ENCODE measurements at regions of chr20 and their contacts with region 1.

Region 1: GRCh38 chr20:4726710-4727397 is 5.1 kb downstream of the PRND start:
- DNase-seq: peak; percentile 62
- ATAC-seq: peak; percentile 35
- H3K4me3 Mint-ChIP-seq: peak overlapping the region; percentile 56
- H3K27ac Mint-ChIP-seq: peak overlapping the region; percentile 52
- H3K4me1 Mint-ChIP-seq: peaks cover 10% of the 10 kb centered on the region
- H3K27me3 Mint-ChIP-seq: no peaks in the 10 kb centered on the region

Region 2: GRCh38 chr20:4607287-4607713 is 119.6 kb before region 1 on chr20:
- CTCF ChIA-PET with region 1: interaction called, 10 read pairs
- POLR2A ChIA-PET with region 1: no interaction called
- DNase-seq: peak; percentile 70
- ATAC-seq: peak; percentile 80
- H3K4me3 Mint-ChIP-seq: no peak overlapping the region
- H3K27ac Mint-ChIP-seq: no peak overlapping the region
- H3K4me1 Mint-ChIP-seq: no peaks in the 10 kb centered on the region
- H3K27me3 Mint-ChIP-seq: peaks cover 20% of the 10 kb centered on the region

Region 3: GRCh38 chr20:4613718-4614620 is 112.9 kb before region 1 on chr20:
- CTCF ChIA-PET with region 1: interaction called, 19 read pairs
- POLR2A ChIA-PET with region 1: no interaction called
- DNase-seq: peak; percentile 83
- ATAC-seq: peak; percentile 87
- H3K4me3 Mint-ChIP-seq: no peak overlapping the region
- H3K27ac Mint-ChIP-seq: no peak overlapping the region
- H3K4me1 Mint-ChIP-seq: peaks cover 8% of the 10 kb centered on the region
- H3K27me3 Mint-ChIP-seq: peaks cover 10% of the 10 kb centered on the region

Region 4: DNA sequence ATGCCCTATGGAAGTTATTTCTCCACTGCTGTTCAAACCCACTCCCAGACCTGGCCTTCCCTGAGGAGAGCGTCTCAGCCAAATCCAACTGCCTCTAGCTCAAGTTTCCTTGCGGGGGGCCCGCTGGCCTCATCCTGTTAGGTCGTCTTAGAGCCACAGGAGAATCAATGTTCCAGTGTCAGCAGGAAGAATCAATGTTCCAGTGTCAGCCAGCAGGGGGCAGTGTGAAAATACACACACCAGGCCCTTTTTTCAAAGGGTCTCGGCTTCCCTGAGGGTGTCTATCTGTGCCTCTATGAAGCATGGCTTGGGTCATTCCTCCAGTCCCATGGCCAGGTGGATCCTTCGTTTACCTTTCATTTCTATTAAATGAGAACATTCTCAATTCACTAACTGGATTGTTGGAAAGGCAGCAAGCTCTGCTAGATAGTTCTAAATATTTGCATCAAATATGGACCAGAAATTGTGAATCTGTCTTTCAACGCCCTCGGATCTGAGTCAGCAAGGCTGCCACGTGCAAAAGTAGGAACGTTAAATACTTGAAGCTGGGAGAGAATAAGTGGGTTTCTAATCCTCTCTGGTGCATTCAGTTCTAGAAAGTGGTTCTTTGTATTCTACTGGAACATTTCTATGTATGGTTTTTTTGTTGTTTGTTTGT is 14.0 kb after region 1 on chr20:
- CTCF ChIA-PET with region 1: interaction called, 16 read pairs
- POLR2A ChIA-PET with region 1: no interaction called
- DNase-seq: peak; percentile 78
- ATAC-seq: peak; percentile 39
- H3K4me3 Mint-ChIP-seq: no peak overlapping the region
- H3K27ac Mint-ChIP-seq: no peak overlapping the region
- H3K4me1 Mint-ChIP-seq: no peaks in the 10 kb centered on the region
- H3K27me3 Mint-ChIP-seq: peaks cover 21% of the 10 kb centered on the region